B cell (primary cell): ENCODE measurements at regions of chr1 and their contacts with region 1.

Region 1: DNA sequence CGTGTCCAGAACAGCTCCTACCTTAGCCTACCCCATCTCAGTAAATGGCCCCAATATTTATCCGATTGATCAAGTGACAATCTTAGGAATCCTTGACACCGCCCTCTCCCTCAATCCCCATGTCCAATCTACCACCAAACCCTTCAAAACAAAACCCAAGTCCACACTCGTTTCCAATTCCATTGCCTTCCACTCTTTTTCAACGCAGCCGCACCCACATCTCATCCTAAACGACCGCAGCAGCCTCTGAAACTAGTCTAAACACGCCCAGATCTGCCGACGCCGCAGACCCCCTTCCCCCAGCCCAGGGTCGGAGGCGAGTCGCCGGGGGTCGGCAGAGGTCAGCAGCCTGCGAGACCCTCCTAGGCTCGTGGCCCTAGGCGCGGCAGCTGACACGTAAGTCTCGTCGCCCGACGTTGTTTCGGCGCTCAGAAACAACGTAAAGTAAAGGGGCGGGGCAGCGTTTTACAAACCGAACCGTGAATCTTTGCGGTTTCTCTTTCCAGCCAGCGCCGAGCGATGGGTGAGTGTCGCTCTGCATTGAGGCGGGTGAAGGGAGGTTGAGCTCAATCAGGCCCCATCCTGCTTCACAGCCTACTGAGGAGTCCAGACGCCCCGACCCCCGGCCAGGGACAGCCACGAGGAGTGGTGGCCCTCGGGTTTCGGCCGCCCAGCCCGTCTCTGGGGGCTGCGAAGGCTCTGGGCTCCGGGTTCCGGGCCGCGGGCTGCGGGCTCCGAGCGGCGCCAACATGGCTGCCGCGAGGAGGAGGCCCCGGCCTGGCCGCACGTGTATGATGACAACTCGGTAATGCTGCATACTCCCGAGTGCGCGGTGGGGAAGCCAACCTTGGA is at the start of gene RPS8:
- DNase-seq: peak; percentile 95
- ATAC-seq: peak; percentile 83
- H3K4me3 ChIP-seq: peak within 1 kb of the TSS; percentile 85 to 99 (median 89)
- H3K4me3 Mint-ChIP-seq: peak within 1 kb of the TSS; percentile 95
- H3K27ac ChIP-seq: peak within 1 kb of the TSS; percentile 89 to 93
- H3K27ac Mint-ChIP-seq: peak within 1 kb of the TSS; percentile 94
- H3K4me1 ChIP-seq: peaks cover 14 to 28% of the 10 kb centered on the region in 2 donors
- H3K4me1 Mint-ChIP-seq: peaks cover 34% of the 10 kb centered on the region
- H3K27me3 ChIP-seq: no peaks in the 10 kb centered on the region
- H3K27me3 Mint-ChIP-seq: no peaks in the 10 kb centered on the region
- CTCF ChIP-seq: no peak
- total RNA-seq, gene RPS8: 2,492 and 2,525 TPM in 2 replicates

Region 2: DNA sequence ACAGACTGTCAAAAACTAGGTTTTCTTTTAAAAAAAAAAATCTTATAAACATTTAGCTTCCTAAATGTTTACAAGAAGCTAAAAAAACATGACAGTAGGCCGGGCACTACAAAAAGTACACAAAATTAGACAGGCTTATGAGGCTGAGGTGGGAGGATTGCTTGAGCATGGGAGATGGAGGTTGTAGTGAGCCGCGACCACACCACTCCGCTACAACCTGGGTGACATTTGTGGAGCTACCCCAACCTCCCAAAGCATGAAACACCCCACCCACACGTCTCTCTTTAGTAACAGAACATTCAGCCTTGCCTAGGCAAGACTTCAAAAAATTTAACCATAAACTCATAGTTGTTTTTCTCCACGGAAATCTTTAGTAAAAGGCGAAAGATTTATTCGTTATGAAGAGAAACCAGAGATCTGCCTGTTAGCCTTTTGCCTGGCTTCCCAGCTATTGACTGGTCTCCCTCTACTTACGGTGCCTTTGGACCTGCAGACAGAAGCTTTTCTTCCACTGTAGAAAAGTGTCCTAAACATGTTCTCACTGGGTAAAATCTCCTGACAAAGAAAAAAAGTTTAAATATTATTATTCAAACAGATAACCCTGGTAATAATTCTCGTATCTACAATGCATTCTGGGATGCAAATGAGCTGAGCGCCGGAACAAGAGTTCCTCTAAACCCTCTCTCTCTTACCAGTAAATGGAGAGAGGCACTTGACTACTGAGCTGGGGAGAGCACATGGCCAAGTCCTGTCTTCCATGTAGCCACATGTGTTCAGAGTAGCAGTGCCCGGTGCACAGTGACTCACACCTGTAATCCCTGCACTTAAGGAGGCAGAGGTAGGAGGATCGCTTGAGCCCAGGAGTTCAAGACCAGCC is 53.6 kb before region 1 on chr1:
- CTCF ChIA-PET with region 1: interaction called, 7 read pairs
- POLR2A ChIA-PET with region 1: interaction called, 11 read pairs
- intact Hi-C with region 1: no loop called
- DNase-seq: peak; percentile 91
- ATAC-seq: peak; percentile 80
- H3K4me3 ChIP-seq: peak overlapping the region in 3 of 5 experiments; percentile 8 to 21 (median 15)
- H3K4me3 Mint-ChIP-seq: peak overlapping the region; percentile 78
- H3K27ac ChIP-seq: peak overlapping the region; percentile 88 to 93
- H3K27ac Mint-ChIP-seq: peak overlapping the region; percentile 99
- H3K4me1 ChIP-seq: peaks cover 43 to 48% of the 10 kb centered on the region in 2 donors
- H3K4me1 Mint-ChIP-seq: peaks cover 62% of the 10 kb centered on the region
- H3K27me3 ChIP-seq: no peaks in the 10 kb centered on the region
- H3K27me3 Mint-ChIP-seq: no peaks in the 10 kb centered on the region
- CTCF ChIP-seq: no peak

Region 3: DNA sequence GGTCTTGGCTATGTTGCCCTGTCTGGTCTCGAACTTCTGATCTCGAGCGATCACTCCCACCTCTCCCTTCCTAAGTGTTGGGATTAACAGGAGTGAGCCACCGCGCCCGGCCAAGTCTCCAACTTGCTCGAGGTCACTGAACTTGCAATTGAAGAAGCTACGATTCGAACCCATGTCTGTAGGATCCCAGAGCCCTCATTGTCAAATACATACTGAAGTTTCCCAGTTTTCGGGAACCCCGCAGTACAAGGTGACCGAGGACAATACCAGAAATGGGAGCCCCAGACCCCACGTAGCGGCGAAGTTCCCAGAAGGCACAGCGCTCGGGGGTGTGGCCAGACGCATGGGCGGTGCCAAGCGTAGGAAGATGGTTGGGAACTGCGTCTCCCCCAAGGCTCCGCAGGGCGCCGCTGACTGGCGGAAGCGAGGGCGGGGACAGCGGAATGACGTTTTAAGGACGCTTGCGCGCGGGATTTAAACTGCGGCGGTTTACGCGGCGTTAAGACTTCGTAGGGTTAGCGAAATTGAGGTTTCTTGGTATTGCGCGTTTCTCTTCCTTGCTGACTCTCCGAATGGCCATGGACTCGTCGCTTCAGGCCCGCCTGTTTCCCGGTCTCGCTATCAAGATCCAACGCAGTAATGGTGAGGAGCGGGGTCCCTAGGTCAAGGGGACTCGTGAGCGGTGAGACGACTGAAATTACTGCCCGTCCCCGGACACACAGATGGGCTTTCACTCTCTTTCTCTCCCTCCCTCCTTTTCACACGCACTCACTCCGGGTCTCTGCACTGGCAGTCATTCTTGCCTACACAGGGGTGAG is 35.7 kb before region 1 on chr1 and contains the start of gene KIF2C:
- CTCF ChIA-PET with region 1: interaction called, 5 read pairs
- POLR2A ChIA-PET with region 1: interaction called, 11 read pairs
- intact Hi-C with region 1: loop called (anchors 1 kb)
- DNase-seq: peak; percentile 97
- ATAC-seq: peak; percentile 100
- H3K4me3 ChIP-seq: peak within 1 kb of the TSS; percentile 54 to 90 (median 87)
- H3K4me3 Mint-ChIP-seq: peak within 1 kb of the TSS; percentile 95
- H3K27ac ChIP-seq: peak within 1 kb of the TSS; percentile 60 to 85
- H3K27ac Mint-ChIP-seq: peak within 1 kb of the TSS; percentile 93
- H3K4me1 ChIP-seq: peaks cover 7 to 12% of the 10 kb centered on the region in 2 donors
- H3K4me1 Mint-ChIP-seq: peaks cover 17% of the 10 kb centered on the region
- H3K27me3 ChIP-seq: no peaks in the 10 kb centered on the region
- H3K27me3 Mint-ChIP-seq: no peaks in the 10 kb centered on the region
- CTCF ChIP-seq: no peak
- total RNA-seq, gene KIF2C: 0.25 and 0.51 TPM in 2 replicates

Region 4: GRCh38 chr1:44799770-44800584 is 24.7 kb after region 1 on chr1 and contains the start of gene PLK3:
- CTCF ChIA-PET with region 1: interaction called, 5 read pairs
- POLR2A ChIA-PET with region 1: interaction called, 11 read pairs
- intact Hi-C with region 1: loop called (anchors 2 kb)
- DNase-seq: peak; percentile 99
- ATAC-seq: peak; percentile 89
- H3K4me3 ChIP-seq: peak within 1 kb of the TSS; percentile 61 to 88 (median 85)
- H3K4me3 Mint-ChIP-seq: peak within 1 kb of the TSS; percentile 99
- H3K27ac ChIP-seq: peak within 1 kb of the TSS; percentile 84 to 93
- H3K27ac Mint-ChIP-seq: peak within 1 kb of the TSS; percentile 100
- H3K4me1 ChIP-seq: peaks cover 16 to 38% of the 10 kb centered on the region in 2 donors
- H3K4me1 Mint-ChIP-seq: peaks cover 33% of the 10 kb centered on the region
- H3K27me3 ChIP-seq: no peaks in the 10 kb centered on the region
- H3K27me3 Mint-ChIP-seq: no peaks in the 10 kb centered on the region
- CTCF ChIP-seq: peak; percentile 85
- total RNA-seq, gene PLK3: 30.1 and 35.9 TPM in 2 replicates

Region 5: DNA sequence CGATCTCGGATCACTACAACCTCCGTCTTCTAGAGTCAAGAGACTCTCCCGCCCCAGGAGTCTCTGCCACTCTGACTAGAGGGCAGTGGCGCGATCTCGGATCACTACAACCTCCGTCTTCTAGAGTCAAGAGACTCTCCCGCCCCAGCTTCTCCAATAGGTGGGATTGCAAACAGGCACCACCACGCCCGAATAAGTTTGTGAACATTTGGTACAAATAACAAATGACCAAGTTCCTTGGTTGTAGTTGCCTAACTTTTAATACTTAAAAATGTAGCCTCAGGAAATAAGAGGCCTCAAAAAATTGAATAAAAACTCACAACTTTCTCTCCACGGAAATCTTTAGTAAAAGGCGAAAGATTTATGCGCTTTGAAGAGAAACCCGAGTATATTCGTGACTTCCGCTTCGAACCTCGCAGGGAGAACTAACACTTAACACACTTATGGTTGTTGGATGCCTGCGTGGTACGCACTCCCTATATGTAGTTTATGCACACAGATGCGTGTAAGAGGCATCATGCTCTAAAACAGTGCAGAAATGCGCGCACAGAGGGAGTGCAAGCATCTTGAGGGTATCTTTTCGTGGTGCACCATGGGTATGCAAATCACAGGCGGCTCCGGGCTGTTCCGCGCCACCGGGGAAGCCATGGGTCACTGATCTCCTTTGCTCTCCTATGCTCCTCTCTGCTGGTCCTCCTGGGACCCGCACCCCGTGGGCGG is 44.5 kb after region 1 on chr1:
- CTCF ChIA-PET with region 1: interaction called, 3 read pairs
- POLR2A ChIA-PET with region 1: interaction called, 14 read pairs
- intact Hi-C with region 1: loop called (anchors 1 kb)
- DNase-seq: peak; percentile 95
- ATAC-seq: peak; percentile 82
- H3K4me3 ChIP-seq: peak overlapping the region; percentile 56 to 80 (median 66)
- H3K4me3 Mint-ChIP-seq: peak overlapping the region; percentile 93
- H3K27ac ChIP-seq: peak overlapping the region; percentile 99 to 100
- H3K27ac Mint-ChIP-seq: peak overlapping the region; percentile 100
- H3K4me1 ChIP-seq: peaks cover 16 to 24% of the 10 kb centered on the region in 2 donors
- H3K4me1 Mint-ChIP-seq: peaks cover 35% of the 10 kb centered on the region
- H3K27me3 ChIP-seq: no peaks in the 10 kb centered on the region
- H3K27me3 Mint-ChIP-seq: no peaks in the 10 kb centered on the region
- CTCF ChIP-seq: no peak

Region 6: DNA sequence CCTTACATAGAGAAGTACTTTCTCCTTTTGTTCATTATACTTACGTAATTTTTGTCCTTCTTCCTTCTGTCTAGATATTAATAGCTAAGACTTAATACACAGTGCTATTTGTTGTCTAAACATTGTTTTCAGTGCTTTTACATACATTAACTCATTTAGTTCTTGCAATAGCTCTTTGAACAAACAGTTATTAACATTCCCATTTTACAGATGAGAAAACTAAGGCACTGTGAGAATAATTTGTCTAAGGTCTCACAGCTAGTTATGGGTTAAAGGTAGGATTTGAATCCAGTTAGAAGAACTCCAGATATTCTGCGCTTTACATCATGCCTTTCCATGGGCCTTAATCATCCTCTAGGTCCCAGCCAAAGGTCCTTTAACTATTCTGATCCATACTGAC is 828.9 kb after region 1 on chr1:
- CTCF ChIA-PET with region 1: no interaction called
- POLR2A ChIA-PET with region 1: no interaction called
- intact Hi-C with region 1: no loop called
- DNase-seq: no peak
- ATAC-seq: no peak
- H3K4me3 ChIP-seq: no peak overlapping the region
- H3K4me3 Mint-ChIP-seq: no peak overlapping the region
- H3K27ac ChIP-seq: no peak overlapping the region
- H3K27ac Mint-ChIP-seq: no peak overlapping the region
- H3K4me1 ChIP-seq: peaks cover 23 to 24% of the 10 kb centered on the region in 2 donors
- H3K4me1 Mint-ChIP-seq: peaks cover 36% of the 10 kb centered on the region
- H3K27me3 ChIP-seq: no peaks in the 10 kb centered on the region
- H3K27me3 Mint-ChIP-seq: no peaks in the 10 kb centered on the region
- CTCF ChIP-seq: no peak